ENCODE measurements at regions of chr16 and their contacts with region 1.

Region 1: GRCh38 chr16:68040507-68041288 is 17.6 kb downstream of the DUS2 start:
- DNase-seq: peak; percentile 90
- ATAC-seq: peak; percentile 91

Region 2: DNA sequence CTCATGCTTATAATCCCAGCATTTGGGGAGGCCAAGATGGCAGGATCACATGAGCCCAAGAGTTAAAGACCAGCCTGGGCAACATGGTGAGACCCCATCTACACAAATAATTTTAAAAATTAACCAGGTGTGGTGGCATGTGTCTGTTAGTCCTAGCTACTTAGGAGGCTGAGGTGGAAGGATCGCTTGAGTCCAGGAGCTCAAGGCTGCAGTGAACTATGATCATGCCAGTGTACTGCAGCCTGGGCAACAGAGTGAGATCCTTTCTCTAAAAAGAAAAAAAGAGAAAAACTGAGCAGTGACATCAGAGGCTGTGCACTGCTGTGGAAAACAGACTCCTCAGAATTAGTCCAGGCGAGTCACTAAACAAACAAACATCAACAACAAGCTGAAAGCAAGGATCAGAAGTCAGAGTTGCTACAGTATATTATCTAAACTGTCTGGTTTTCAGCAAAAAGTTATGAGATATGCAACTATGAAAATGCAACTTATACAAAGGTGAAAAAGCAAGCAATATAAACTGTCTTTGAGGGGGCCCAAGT is 972.4 kb before region 1 on chr16:
- intact Hi-C with region 1: no loop called
- DNase-seq: no peak
- ATAC-seq: no peak

Region 3: GRCh38 chr16:67825119-67825518 is 215.6 kb before region 1 on chr16:
- intact Hi-C with region 1: loop called (anchors 5 kb)
- DNase-seq: no peak
- ATAC-seq: no peak

Measured in sciatic nerve (tissue), 2 donors.